ENCODE measurements at regions of chr1 and their contacts with region 1.

Region 1: GRCh38 chr1:6464514-6464836 is 1.5 kb downstream of the TNFRSF25 start:
- DNase-seq: no peak
- H3K4me3 ChIP-seq: peak overlapping the region; percentile 81
- H3K4me3 Mint-ChIP-seq: peak overlapping the region; percentile 88 to 98 (median 91)
- H3K27ac ChIP-seq: no peak overlapping the region
- H3K27ac Mint-ChIP-seq: peak overlapping the region; percentile 81 to 98 (median 94)
- H3K4me1 ChIP-seq: peaks cover 57% of the 10 kb centered on the region
- H3K4me1 Mint-ChIP-seq: peaks cover 35 to 61% (median 42%) of the 10 kb centered on the region in 3 donors
- H3K27me3 ChIP-seq: no peaks in the 10 kb centered on the region
- H3K27me3 Mint-ChIP-seq: no peaks in the 10 kb centered on the region

Region 2: DNA sequence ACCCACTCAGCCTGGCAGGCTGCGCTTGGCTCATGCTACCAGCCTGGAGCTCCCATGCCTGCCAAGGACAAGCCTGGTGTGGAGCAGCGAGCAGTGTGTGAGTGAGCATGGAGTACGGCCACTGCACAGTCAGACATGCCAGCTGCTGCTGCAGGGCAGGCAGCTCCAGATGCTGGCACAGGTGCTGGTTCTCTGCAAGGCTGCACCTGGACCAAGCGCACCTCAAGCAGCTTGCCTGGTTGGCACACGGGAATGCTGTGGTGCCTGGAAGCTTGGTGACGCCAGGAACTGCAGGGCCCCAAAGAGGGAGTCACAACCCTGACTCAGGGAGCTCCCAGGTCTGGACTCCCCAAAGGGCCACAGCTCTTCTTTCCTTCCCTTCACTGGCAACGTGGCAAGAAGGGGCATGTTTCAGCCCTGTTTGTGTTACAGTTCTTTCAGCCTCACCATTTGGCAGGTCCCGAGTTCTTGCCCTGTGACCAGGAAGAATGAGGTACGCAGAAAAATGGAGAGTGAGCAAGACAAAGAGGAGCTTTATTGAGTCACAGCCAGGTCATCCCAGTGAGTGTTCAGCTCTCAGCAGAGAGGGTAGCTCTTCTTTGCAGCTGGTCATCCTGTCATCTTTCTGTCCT is 97.0 kb before region 1 on chr1:
- CTCF ChIA-PET with region 1: no interaction called
- POLR2A ChIA-PET with region 1: no interaction called
- DNase-seq: no peak
- H3K4me3 ChIP-seq: no peak overlapping the region
- H3K4me3 Mint-ChIP-seq: no peak overlapping the region
- H3K27ac ChIP-seq: no peak overlapping the region
- H3K27ac Mint-ChIP-seq: no peak overlapping the region
- H3K4me1 ChIP-seq: peaks cover 29% of the 10 kb centered on the region
- H3K4me1 Mint-ChIP-seq: peaks cover 16 to 24% (median 24%) of the 10 kb centered on the region in 3 donors
- H3K27me3 ChIP-seq: no peaks in the 10 kb centered on the region
- H3K27me3 Mint-ChIP-seq: no peaks in the 10 kb centered on the region

Region 3: DNA sequence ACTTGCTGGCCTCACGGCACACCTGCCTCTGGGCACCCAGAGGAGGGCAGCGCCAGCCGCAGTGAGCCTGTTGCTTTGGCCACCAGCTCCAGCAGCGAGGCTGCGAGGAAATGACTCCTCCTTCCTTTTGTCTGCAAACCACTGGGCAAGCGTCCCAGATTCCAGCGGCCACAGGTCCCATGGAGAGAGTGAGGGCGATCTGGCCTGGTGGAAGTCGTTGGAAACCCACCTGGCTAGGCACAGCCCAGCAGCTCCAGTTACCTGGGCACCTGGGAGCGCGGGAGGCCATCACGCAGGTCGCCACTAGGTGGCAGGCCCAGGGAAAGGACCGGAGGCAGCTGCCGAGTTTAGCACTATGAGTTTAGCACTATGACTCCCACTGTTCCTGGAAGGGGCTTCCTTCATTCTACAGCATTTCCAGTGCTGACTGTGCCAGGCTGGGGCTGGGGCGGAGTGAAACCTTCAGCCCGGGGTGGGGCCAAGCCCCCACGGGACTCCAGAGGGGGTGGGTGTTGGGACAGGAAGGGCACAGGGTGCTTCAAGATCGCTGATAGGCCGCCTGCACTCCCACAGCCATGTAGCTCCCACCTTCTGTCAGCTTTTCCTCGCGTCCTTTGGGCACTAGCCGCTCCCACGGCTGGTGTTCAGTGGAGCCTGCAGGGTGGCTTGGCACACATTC is 41.0 kb before region 1 on chr1:
- CTCF ChIA-PET with region 1: interaction called, 13 read pairs
- POLR2A ChIA-PET with region 1: interaction called, 6 read pairs
- DNase-seq: peak; percentile 51 to 73 (median 58)
- H3K4me3 ChIP-seq: peak overlapping the region; percentile 32
- H3K4me3 Mint-ChIP-seq: peak overlapping the region; percentile 50 to 76 (median 66)
- H3K27ac ChIP-seq: no peak overlapping the region
- H3K27ac Mint-ChIP-seq: no peak overlapping the region
- H3K4me1 ChIP-seq: peaks cover 16% of the 10 kb centered on the region
- H3K4me1 Mint-ChIP-seq: peaks cover 9 to 29% (median 17%) of the 10 kb centered on the region in 3 donors
- H3K27me3 ChIP-seq: peaks cover 42% of the 10 kb centered on the region
- H3K27me3 Mint-ChIP-seq: peaks cover 35 to 44% of the 10 kb centered on the region in 2 donors

Region 4: GRCh38 chr1:6448749-6449631 is 15.5 kb before region 1 on chr1:
- CTCF ChIA-PET with region 1: interaction called, 19 read pairs
- POLR2A ChIA-PET with region 1: interaction called, 21 read pairs
- DNase-seq: no peak
- H3K4me3 ChIP-seq: no peak overlapping the region
- H3K4me3 Mint-ChIP-seq: peak overlapping the region; percentile 30 to 86 (median 59)
- H3K27ac ChIP-seq: no peak overlapping the region
- H3K27ac Mint-ChIP-seq: peak overlapping the region in 6 of 8 donors; percentile 3 to 77 (median 18)
- H3K4me1 ChIP-seq: peaks cover 13% of the 10 kb centered on the region
- H3K4me1 Mint-ChIP-seq: peaks cover 6 to 38% (median 18%) of the 10 kb centered on the region in 3 donors
- H3K27me3 ChIP-seq: peaks cover 29% of the 10 kb centered on the region
- H3K27me3 Mint-ChIP-seq: peaks cover 45 to 61% of the 10 kb centered on the region in 2 donors

Region 5: DNA sequence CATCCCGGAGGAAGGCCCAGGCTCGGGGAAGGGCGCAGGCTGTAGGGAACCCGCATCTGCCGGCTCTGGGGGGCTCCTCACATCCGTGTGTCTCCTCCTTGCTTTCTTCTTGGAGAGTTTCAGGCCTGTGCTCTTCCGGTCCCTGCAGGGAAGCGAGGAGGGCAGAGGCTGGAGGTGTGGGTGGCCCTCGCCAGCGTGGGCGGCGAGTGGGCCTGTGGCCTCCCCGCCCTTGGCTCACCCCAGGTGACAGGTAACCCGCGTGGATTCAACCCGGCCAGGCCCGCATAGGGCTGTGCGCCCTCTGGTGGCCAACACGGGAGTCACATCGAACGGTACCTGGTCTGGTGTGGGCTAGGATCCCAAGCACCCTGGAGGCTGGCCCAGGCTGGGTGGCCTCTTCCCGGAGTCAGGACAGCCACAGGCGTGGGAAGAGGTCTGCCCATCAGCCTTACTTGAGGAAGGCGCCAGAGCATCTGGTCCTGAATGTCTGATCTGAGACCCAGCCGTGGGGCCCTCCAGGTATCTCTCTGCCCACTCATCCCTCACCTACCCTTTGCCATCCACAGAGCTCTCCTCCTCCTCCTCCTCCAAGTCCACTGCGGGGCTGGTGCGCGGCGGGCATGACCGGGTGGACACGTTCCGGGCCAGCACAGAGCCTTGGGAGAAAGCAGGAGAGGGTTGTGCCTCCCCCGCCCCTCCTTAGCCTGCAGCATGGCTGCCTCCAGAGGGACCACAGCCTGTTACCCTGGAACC is 11.1 kb after region 1 on chr1:
- CTCF ChIA-PET with region 1: interaction called, 14 read pairs
- POLR2A ChIA-PET with region 1: interaction called, 4 read pairs
- DNase-seq: peak; percentile 67 to 86 (median 73)
- H3K4me3 ChIP-seq: no peak overlapping the region
- H3K4me3 Mint-ChIP-seq: no peak overlapping the region
- H3K27ac ChIP-seq: no peak overlapping the region
- H3K27ac Mint-ChIP-seq: peak overlapping the region in 1 of 8 donors; percentile 93
- H3K4me1 ChIP-seq: peaks cover 8% of the 10 kb centered on the region
- H3K4me1 Mint-ChIP-seq: peaks cover 0 to 7% (median 0%) of the 10 kb centered on the region in 3 donors
- H3K27me3 ChIP-seq: no peaks in the 10 kb centered on the region
- H3K27me3 Mint-ChIP-seq: peaks cover 0 to 3% of the 10 kb centered on the region in 2 donors

Measured in CD8-positive, alpha-beta memory T cell (primary cell).